Esophagus muscularis mucosa (tissue), 4 donors: ENCODE measurements at regions of chr3 and their contacts with region 1.

Region 1: DNA sequence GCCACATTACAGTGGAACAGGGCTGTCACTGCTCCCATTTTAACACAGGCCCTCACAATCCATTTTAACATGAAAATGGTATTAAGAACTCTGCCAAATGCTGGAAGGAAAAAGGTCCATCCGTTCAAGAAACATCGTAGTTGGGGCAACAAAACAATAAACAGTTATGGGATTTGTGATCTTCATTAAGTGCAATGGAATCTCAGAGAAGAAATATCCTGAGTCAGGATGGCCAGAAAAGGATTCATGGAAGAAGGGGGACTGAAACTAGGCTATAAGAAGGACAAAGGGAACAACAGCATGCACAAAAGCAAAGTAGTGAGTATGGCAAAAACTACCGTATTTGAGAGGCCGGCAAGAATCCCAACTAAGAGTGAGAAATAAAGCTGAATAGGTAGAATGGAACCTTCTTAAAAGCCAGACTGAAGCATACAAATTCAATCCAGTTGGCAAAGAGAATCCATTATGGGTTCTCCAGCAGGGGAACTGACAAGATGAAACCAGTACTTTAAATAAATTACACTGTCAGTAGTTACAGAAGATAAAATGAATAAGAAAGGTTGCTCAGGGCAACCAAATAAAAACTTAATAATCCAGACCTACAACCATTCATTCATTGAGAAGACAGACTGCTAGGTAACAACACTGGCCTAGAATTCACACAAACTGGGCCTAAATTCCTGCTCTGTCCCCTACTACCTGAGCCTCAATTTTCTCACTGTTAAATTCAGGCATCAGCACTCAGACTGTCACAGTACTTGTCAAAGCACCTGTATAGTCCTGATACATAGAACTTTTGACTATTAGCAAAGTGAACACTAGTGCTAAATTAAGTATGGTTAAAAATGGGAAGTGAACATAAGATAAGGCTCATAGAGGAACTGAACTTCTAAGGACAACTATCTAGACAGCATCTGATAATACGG is 6.3 kb downstream of the TBL1XR1 start:
- DNase-seq: no peak
- H3K4me3 ChIP-seq: no peak overlapping the region
- H3K27ac ChIP-seq: peak overlapping the region; percentile 30 to 67 (median 62)
- H3K4me1 ChIP-seq: peaks cover 43 to 71% (median 57%) of the 10 kb centered on the region in 4 donors
- H3K27me3 ChIP-seq: no peaks in the 10 kb centered on the region
- CTCF ChIP-seq: no peak
- EP300 ChIP-seq: no peak
- POLR2A ChIP-seq: no peak

Region 2: GRCh38 chr3:177050501-177051237 is 140.3 kb before region 1 on chr3:
- intact Hi-C with region 1: loop called (anchors 5 kb)
- DNase-seq: no peak
- H3K4me3 ChIP-seq: no peak overlapping the region
- H3K27ac ChIP-seq: no peak overlapping the region
- H3K4me1 ChIP-seq: peaks cover 15 to 26% (median 22%) of the 10 kb centered on the region in 4 donors
- H3K27me3 ChIP-seq: no peaks in the 10 kb centered on the region
- CTCF ChIP-seq: peak; percentile 61 to 72 (median 63)
- EP300 ChIP-seq: no peak
- POLR2A ChIP-seq: no peak

Region 3: DNA sequence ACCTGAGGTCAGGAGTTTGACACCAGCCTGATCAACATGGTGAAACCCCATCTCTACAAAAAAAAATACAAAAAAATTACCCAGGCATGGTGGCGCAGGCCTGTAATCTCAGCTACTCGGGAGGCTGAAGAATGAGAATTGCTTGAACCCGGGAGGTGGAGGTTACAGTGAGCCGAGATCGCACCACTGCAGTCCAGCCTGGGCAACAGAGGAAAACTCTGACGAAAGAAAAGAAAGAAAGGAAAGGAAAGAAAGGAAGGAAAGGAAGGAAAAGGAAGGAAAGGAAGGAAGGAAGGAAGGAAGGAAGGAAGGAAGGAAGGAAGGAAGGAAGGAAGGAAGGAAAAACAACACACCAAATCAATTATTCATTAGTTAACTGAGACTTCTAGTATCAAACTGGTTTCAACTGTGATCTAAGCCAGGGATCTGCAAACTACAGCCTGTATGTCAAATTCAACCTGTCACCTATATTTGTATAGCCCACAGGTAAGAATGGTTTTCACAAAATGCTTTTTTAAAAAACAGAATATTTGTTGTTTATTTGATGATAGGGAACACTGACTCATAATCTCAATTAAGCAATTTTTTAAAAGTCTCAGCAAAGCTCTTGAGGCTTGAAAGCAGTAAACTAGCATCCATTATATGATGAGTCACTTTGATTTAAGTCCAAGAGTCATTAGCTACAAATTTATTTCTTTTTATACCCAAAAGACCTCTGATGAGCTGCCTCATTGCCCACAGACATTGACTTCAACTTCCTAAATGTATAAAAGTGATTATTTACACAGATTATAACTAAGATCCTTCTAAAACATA is 121.3 kb before region 1 on chr3:
- intact Hi-C with region 1: no loop called
- DNase-seq: no peak
- H3K4me3 ChIP-seq: no peak overlapping the region
- H3K27ac ChIP-seq: no peak overlapping the region
- H3K4me1 ChIP-seq: peaks cover 36 to 44% (median 36%) of the 10 kb centered on the region in 4 donors
- H3K27me3 ChIP-seq: no peaks in the 10 kb centered on the region
- CTCF ChIP-seq: no peak
- EP300 ChIP-seq: no peak
- POLR2A ChIP-seq: no peak

Region 4: GRCh38 chr3:177330779-177331178 is 139.8 kb after region 1 on chr3:
- intact Hi-C with region 1: no loop called
- DNase-seq: no peak
- H3K4me3 ChIP-seq: no peak overlapping the region
- H3K27ac ChIP-seq: no peak overlapping the region
- H3K4me1 ChIP-seq: peaks cover 16 to 28% (median 22%) of the 10 kb centered on the region in 4 donors
- H3K27me3 ChIP-seq: no peaks in the 10 kb centered on the region
- CTCF ChIP-seq: no peak
- EP300 ChIP-seq: no peak
- POLR2A ChIP-seq: no peak